Activated CD4-positive, alpha-beta memory T cell treated with anti-CD3 and anti-CD28 coated beads for 36 hours (primary cell): ENCODE measurements at regions of chr19 and their contacts with region 1.

Region 1: GRCh38 chr19:55160128-55160985 is 2.8 kb upstream of the TNNI3 start:
- DNase-seq: peak; percentile 93
- H3K4me3 Mint-ChIP-seq: no peak overlapping the region
- H3K27ac Mint-ChIP-seq: no peak overlapping the region
- H3K4me1 Mint-ChIP-seq: peaks cover 4% of the 10 kb centered on the region
- H3K27me3 Mint-ChIP-seq: peaks cover 36% of the 10 kb centered on the region

Region 2: DNA sequence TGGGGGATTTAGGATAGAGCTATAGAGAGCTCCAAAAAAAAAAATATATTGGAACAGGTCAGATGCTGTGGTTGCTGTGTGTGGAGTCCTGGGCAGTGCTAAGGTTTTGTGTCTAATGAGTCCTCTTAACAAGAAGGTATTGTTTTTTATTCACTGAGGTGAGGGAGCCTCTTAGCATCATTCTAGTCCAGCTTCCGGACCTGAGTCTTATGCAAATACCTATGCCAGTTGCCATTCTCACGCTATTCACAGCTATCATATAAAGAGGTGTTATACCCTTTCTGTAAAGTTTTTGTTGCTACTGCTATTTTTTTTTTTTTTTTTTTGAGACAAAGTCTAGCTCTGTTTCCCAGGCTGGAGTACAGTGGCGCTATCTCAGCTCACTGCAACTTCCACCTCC is 192.7 kb before region 1 on chr19:
- CTCF ChIA-PET with region 1: no interaction called
- POLR2A ChIA-PET with region 1: no interaction called
- intact Hi-C with region 1: no loop called
- DNase-seq: no peak
- H3K4me3 Mint-ChIP-seq: no peak overlapping the region
- H3K27ac Mint-ChIP-seq: no peak overlapping the region
- H3K4me1 Mint-ChIP-seq: peaks cover 2% of the 10 kb centered on the region
- H3K27me3 Mint-ChIP-seq: no peaks in the 10 kb centered on the region

Region 3: DNA sequence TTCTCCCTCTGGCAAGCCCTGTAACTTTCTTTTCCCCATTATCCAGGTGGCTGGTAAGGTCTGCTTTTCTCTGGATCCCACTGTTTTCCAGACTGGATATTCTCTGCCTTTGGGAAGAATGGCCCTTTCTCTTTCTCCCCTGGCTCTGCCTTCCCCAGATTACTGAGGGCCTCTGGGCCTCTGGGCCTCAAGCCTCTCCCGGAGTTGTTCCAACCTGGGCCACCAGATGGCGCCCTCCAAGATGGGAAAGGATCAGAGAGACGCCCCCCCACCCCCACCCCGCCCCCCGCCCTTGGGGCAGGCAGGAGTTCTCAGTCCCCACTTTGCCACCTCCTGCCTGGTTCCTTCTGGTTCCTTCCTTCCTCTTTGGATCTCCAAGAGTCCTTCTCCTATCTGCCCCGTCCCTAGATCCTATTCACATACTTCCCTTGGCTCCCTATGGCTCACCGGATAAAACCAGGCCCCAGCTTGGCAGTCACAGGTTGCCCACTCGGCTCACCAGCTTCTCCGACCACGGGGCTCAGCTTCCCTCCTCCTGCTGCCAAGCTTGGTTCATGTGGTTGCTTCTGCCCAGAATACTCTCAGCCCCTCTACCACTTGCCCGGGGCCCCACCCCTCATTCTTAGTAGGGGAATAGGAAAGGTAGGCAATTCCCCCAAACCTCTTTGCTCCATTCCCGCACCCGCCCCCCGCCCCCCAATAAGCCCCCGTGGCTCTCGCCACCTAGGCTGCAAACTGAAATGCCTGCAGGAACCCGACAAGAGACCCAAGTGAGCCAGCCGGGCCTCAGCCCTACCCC is 71.6 kb before region 1 on chr19:
- CTCF ChIA-PET with region 1: interaction called, 22 read pairs
- POLR2A ChIA-PET with region 1: no interaction called
- intact Hi-C with region 1: no loop called
- DNase-seq: peak; percentile 85
- H3K4me3 Mint-ChIP-seq: peak overlapping the region; percentile 24
- H3K27ac Mint-ChIP-seq: no peak overlapping the region
- H3K4me1 Mint-ChIP-seq: peaks cover 20% of the 10 kb centered on the region
- H3K27me3 Mint-ChIP-seq: peaks cover 33% of the 10 kb centered on the region

Region 4: GRCh38 chr19:55117636-55118391 is 42.5 kb before region 1 on chr19 and contains the start of gene PPP1R12C:
- CTCF ChIA-PET with region 1: interaction called, 3 read pairs
- POLR2A ChIA-PET with region 1: no interaction called
- intact Hi-C with region 1: loop called (anchors 1 kb)
- DNase-seq: peak; percentile 99
- H3K4me3 Mint-ChIP-seq: peak within 1 kb of the TSS; percentile 97
- H3K27ac Mint-ChIP-seq: peak within 1 kb of the TSS; percentile 89
- H3K4me1 Mint-ChIP-seq: peaks cover 30% of the 10 kb centered on the region
- H3K27me3 Mint-ChIP-seq: peaks cover under 1% of the 10 kb centered on the region
- total RNA-seq, gene PPP1R12C: 62.7 to 73.2 TPM

Region 5: DNA sequence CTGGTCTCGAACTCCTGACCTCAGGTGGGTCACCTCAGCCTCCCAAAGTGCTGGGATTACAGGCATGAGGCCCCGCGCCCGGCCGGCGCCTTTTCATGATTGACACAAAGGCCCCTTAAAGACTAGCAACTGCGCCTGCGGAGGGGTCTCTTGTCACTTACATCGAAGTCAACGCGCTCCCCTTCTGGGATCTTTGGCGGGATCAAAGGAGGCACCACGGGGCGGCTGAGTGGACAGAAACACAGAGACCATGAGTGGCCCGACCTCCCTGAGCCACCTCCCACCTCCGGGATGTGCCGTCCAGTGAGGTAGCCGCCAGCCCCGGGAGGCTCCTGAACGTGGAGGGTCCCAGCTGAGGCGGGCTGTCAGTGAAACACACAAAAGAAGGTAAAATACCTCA is 18.7 kb before region 1 on chr19:
- CTCF ChIA-PET with region 1: interaction called, 35 read pairs
- POLR2A ChIA-PET with region 1: no interaction called
- intact Hi-C with region 1: no loop called
- DNase-seq: no peak
- H3K4me3 Mint-ChIP-seq: no peak overlapping the region
- H3K27ac Mint-ChIP-seq: no peak overlapping the region
- H3K4me1 Mint-ChIP-seq: peaks cover 3% of the 10 kb centered on the region
- H3K27me3 Mint-ChIP-seq: peaks cover 45% of the 10 kb centered on the region

Region 6: GRCh38 chr19:55173714-55174409 is 13.5 kb after region 1 on chr19:
- CTCF ChIA-PET with region 1: interaction called, 17 read pairs
- POLR2A ChIA-PET with region 1: no interaction called
- intact Hi-C with region 1: no loop called
- DNase-seq: peak; percentile 69
- H3K4me3 Mint-ChIP-seq: peak overlapping the region; percentile 43
- H3K27ac Mint-ChIP-seq: no peak overlapping the region
- H3K4me1 Mint-ChIP-seq: peaks cover 5% of the 10 kb centered on the region
- H3K27me3 Mint-ChIP-seq: peaks cover 62% of the 10 kb centered on the region